Posterior vena cava (tissue), 2 donors: ENCODE measurements at regions of chr10 and their contacts with region 1.

Region 1: DNA sequence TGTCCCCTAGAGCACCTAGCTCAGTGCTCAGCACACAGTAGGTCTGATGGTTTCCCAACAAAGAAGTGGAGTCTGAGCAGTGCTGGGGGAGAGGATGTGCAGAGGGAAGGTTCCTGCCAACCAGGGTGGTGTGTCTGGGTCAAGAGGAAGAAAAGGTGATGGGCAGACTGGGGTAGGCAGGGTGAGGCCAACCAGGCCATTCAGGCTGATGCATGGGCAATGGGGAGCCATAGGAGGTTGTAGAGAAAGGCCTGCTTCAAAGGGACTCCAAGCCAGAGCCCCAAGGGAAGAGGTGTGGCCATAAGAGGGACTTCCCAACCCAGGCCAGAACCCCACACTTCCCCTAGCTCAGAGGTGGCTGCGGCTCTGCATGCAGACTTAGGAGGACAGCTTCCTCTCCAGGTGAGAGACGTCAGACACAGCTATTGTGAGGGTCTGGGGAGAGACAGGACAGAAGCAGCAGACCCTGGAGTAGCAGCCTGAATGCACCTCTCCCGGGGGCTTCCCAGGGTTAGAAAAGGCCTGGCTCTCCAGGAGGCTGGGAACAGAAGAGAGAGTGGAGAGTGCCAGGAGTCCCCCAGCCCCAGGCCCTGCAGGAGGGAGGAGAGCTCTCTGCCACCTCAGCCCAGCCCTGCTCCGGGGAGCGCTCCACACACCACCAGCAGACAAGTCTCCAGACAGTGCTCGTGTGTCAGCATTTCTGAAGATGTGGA is 87.4 kb upstream of the ZMIZ1 start:
- DNase-seq: no peak

Region 2: GRCh38 chr10:78944723-78945312 is 36.6 kb before region 1 on chr10:
- intact Hi-C with region 1: loop called in 1 of 2 experiments (anchors 1 kb)
- DNase-seq: peak; percentile 84